ENCODE measurements at regions of chr2 and their contacts with region 1.

Region 1: DNA sequence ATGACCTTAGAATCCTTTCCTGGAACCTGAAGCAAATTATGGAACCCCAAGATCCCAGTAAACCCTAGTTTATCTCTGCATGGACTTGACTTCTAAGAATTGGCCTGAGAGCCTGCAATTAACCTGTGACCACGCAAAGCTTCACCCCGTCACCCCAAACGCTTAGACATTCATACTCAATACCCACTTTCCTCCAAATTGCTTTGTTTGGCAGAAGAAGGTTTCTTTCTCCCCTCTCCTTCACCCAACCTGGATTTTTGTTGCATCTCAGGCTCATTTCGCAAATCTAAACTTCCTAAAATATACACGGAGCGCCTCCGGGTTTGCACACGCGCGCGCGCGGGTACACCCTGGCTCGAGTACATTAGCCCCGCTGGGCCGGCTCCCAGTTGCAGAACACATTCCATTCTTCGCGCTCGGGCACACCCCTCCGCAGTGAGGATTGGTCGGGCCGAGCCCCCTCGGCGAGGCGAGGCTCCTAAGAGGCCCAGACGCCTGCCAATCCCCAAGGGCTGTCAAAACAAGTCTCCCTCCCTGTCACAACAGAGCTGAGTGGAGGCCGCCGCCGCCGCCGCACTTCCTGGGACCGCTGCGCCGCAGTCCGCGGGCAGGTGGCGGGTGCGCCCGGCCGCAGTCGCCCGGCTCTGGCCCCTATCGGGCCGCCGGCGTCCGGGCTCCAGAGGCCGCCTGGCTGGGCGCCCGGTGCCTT is at the start of gene PLCL1:
- DNase-seq: peak; percentile 89 to 93 (median 92)
- ATAC-seq: peak; percentile 95
- H3K4me3 ChIP-seq: peak within 1 kb of the TSS; percentile 82
- H3K27ac ChIP-seq: peak within 1 kb of the TSS; percentile 61
- H3K4me1 ChIP-seq: peaks cover 6 to 19% of the 10 kb centered on the region in 2 experiments; a peak in 4 of 5 replicates
- H3K27me3 ChIP-seq: no peaks in the 10 kb centered on the region
- CTCF ChIP-seq: peak in 1 of 3 experiments; percentile 25; a peak in 1 of 6 replicates
- EP300 ChIP-seq: no peak
- POLR2A ChIP-seq: 0 out of 2 replicates have a peak, but pooled peaks have one; percentile 23
- RAD21 ChIP-seq: peak; percentile 12 to 37; a peak in 1 of 4 replicates
- polyA plus RNA-seq, gene PLCL1: 2.0 to 3.0 TPM

Region 2: DNA sequence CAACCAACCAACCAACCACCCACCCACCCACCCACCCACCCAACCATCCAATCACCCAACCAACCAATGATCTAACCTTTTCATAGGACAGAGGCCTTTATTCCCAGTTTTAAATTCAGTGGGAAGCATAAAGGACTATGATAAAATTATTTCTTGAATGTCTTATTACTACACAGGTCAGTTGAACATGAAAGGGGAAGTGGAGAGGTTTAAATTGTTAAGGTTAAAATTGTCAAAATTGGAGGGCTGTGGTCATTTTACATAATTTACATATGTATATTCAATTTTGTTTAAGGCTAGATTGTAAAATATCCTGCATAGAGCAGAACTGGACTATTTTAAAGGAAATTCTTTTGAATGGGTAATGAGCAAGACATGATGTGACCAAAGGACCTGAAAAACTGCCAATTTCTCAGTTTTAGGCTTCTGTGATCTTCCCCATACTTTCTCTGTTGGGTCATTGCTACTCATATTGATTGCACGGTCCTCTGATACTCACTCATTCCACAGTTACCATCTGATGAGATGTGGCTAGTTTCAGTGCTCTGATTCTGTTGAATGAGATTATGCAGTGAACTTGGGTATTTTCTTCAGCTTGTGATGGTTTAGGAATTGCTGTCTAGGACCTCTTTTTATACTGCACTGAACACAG is 127.6 kb after region 1 on chr2:
- CTCF ChIA-PET with region 1: no interaction called
- POLR2A ChIA-PET with region 1: no interaction called
- in situ Hi-C with region 1: no loop called
- intact Hi-C with region 1: loop called (anchors 2 kb)
- DNase-seq: no peak
- ATAC-seq: peak; percentile 2; the same call in 1 of the 3 replicates
- H3K4me3 ChIP-seq: no peak overlapping the region
- H3K27ac ChIP-seq: peak overlapping the region; percentile 88
- H3K4me1 ChIP-seq: peaks cover under 1 to 54% of the 10 kb centered on the region in 2 experiments
- H3K27me3 ChIP-seq: no peaks in the 10 kb centered on the region
- CTCF ChIP-seq: no peak
- EP300 ChIP-seq: no peak
- POLR2A ChIP-seq: no peak
- RAD21 ChIP-seq: no peak

Region 3: DNA sequence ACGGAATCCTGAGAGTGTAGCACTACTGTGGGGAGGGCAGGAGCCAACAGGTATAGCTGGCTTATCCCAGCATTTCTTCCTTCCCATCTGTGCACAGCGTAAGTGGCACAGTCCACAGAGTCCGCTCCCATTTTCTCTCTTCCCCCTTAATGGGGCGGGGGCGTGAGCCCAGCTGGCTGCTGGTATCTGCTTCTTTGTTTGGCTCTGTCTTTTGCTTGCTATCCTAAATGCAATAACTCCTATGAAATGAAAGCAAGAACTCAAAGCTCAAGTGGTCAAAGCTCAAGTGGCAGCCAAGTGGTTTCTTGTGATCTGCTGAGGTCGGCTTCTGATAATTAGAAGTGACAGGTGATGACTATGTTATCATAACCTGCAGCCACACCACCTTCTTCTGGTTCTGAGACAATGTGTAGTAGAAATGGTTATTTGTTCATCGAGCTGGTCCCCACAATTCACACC is 192.9 kb after region 1 on chr2:
- CTCF ChIA-PET with region 1: no interaction called
- POLR2A ChIA-PET with region 1: no interaction called
- in situ Hi-C with region 1: no loop called
- intact Hi-C with region 1: loop called (anchors 5 kb)
- DNase-seq: peak in 2 of 4 experiments; percentile 16 to 65
- ATAC-seq: peak; percentile 43
- H3K4me3 ChIP-seq: no peak overlapping the region
- H3K27ac ChIP-seq: peak overlapping the region; percentile 67
- H3K4me1 ChIP-seq: peaks cover 22 to 56% of the 10 kb centered on the region in 2 experiments
- H3K27me3 ChIP-seq: no peaks in the 10 kb centered on the region
- CTCF ChIP-seq: no peak
- EP300 ChIP-seq: no peak
- POLR2A ChIP-seq: no peak
- RAD21 ChIP-seq: no peak

Region 4: GRCh38 chr2:198127627-198128026 is 323.4 kb after region 1 on chr2:
- CTCF ChIA-PET with region 1: interaction called, 7 read pairs
- POLR2A ChIA-PET with region 1: no interaction called
- in situ Hi-C with region 1: loop called (anchors 10 kb)
- intact Hi-C with region 1: loop called (anchors 1 kb)
- DNase-seq: peak; percentile 28 to 72 (median 46)
- ATAC-seq: peak; percentile 87
- H3K4me3 ChIP-seq: no peak overlapping the region
- H3K27ac ChIP-seq: no peak overlapping the region
- H3K4me1 ChIP-seq: peaks cover 0 to 3% of the 10 kb centered on the region in 2 experiments; a peak in 2 of 5 replicates
- H3K27me3 ChIP-seq: no peaks in the 10 kb centered on the region
- CTCF ChIP-seq: peak; percentile 52 to 60 (median 53)
- EP300 ChIP-seq: no peak
- POLR2A ChIP-seq: no peak
- RAD21 ChIP-seq: peak; percentile 42 to 75

Region 5: DNA sequence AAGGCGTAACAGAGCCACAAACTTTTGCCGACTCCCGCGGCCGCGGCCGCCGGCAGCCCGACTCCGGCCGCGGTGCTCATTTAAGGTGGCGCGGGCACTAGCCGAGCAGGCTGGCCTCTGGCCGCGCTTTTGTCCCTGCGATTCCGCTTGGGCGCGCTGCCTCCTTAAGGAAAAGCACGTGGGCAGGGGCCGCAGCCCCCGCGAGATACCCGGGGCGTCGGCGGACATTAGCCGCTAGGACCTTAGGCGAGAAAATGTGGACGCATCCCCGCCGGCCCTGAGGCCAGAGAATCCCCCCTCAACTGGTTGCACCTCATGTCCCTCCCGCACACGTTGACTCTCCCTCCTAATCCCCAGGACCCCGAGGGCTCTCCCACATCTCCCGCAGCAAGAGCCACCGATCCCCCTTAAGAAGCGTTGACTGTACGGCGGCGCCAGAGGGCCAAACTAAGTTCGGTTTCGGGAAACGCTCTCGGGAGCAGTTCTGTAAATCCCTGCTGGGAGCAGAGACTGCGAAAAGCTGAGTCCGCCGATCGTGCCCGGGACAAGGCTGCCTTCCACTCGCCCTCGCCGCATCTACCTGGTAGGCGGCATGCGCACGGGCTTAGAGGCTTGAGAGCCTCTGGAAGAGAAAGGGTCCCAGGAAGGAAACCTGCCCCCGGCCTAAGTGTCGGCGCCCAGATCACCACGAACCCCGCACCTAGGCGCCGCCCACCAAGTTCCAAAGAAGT is 1655.2 kb after region 1 on chr2:
- CTCF ChIA-PET with region 1: no interaction called
- POLR2A ChIA-PET with region 1: no interaction called
- in situ Hi-C with region 1: no loop called
- intact Hi-C with region 1: loop called (anchors 10 kb)
- DNase-seq: peak; percentile 44 to 84 (median 60)
- ATAC-seq: peak; percentile 27
- H3K4me3 ChIP-seq: peak overlapping the region; percentile 54
- H3K27ac ChIP-seq: peak overlapping the region; percentile 86
- H3K4me1 ChIP-seq: peaks cover 0 to 31% of the 10 kb centered on the region in 2 experiments; a peak in 2 of 5 replicates
- H3K27me3 ChIP-seq: no peaks in the 10 kb centered on the region
- CTCF ChIP-seq: no peak
- EP300 ChIP-seq: 0 out of 2 replicates have a peak, but pooled peaks have one; percentile 5
- POLR2A ChIP-seq: peak; percentile 57; the same call in 1 of the 2 replicates
- RAD21 ChIP-seq: no peak

Measured in K562 (cell line).